ENCODE measurements at regions of chr13 and their contacts with region 1.

Region 1: GRCh38 chr13:50635504-50635903 is 208.0 kb downstream of the DLEU7 start:
- DNase-seq: peak; percentile 42
- ATAC-seq: peak; percentile 88
- H3K4me3 ChIP-seq: no peak overlapping the region
- H3K27ac ChIP-seq: 0 out of 2 replicates have a peak overlapping the region, but pooled peaks have one; percentile 4
- H3K4me1 ChIP-seq: peaks cover 8% of the 10 kb centered on the region
- H3K27me3 ChIP-seq: no peaks in the 10 kb centered on the region
- CTCF ChIP-seq: no peak
- EP300 ChIP-seq: no peak
- POLR2A ChIP-seq: no peak
- RAD21 ChIP-seq: no peak

Region 2: DNA sequence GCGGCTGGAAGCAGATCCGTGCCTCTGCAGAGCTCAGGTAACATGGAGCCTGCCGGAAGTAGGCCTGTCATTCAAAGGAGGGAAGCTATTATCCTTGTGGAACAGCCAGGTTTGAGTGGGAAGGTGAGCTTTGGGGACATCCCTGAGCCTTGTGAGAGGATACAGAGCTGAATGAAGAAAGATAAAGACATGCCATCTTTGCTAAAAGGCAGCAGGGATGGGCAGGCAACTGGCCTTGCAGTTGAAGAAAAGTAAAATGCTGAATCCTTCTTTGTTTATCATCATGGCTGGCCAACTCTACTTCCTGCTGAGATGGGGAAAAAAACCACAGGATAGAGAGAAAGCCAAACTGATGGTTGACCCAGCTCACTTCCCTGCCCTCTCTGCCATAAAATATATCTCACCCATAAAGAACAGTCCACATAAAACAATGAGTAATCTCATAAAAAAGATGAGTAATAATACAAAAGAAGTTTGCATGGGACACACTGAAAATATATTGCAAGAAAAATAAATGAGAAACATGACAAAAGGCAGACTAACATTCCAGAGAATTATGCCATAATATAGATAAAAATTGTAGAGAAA is 18.3 kb before region 1 on chr13:
- CTCF ChIA-PET with region 1: interaction called, 3 read pairs
- POLR2A ChIA-PET with region 1: interaction called, 3 read pairs
- RAD21 ChIA-PET with region 1: interaction called, 3 read pairs
- SMC1A ChIA-PET with region 1: interaction called, 10 read pairs
- in situ Hi-C with region 1: no loop called
- intact Hi-C with region 1: no loop called
- DNase-seq: no peak
- ATAC-seq: no peak
- H3K4me3 ChIP-seq: no peak overlapping the region
- H3K27ac ChIP-seq: no peak overlapping the region
- H3K4me1 ChIP-seq: no peaks in the 10 kb centered on the region
- H3K27me3 ChIP-seq: peaks cover 0 to 5% of the 10 kb centered on the region in 2 experiments; a peak in 1 of 4 replicates
- CTCF ChIP-seq: no peak
- EP300 ChIP-seq: no peak
- POLR2A ChIP-seq: no peak
- RAD21 ChIP-seq: no peak

Region 3: GRCh38 chr13:50650592-50651301 is 15.2 kb after region 1 on chr13:
- CTCF ChIA-PET with region 1: no interaction called
- POLR2A ChIA-PET with region 1: no interaction called
- RAD21 ChIA-PET with region 1: interaction called, 14 read pairs
- SMC1A ChIA-PET with region 1: interaction called, 10 read pairs
- in situ Hi-C with region 1: no loop called
- intact Hi-C with region 1: no loop called
- DNase-seq: no peak
- ATAC-seq: peak; percentile 35
- H3K4me3 ChIP-seq: no peak overlapping the region
- H3K27ac ChIP-seq: no peak overlapping the region
- H3K4me1 ChIP-seq: no peaks in the 10 kb centered on the region
- H3K27me3 ChIP-seq: no peaks in the 10 kb centered on the region
- CTCF ChIP-seq: no peak
- EP300 ChIP-seq: no peak
- POLR2A ChIP-seq: no peak
- RAD21 ChIP-seq: no peak

Region 4: DNA sequence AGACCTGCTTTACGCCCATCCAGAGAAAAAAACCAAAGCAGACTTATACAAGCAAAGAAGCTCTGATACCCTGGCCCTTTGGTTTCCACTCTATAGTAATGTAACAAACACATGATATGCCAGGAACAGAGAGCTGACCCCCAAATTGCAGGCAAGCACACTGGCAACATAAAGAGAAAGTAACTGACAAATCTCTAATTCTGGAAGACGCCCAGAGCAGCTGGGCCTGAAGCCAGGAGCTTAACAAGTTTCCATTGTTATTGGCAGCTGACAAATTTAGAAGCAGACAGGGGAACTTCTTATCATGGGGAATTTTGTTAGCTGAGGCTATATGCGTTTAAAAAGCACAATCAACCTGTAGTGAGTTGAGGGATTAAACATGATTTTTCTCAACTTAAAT is 50.0 kb after region 1 on chr13:
- CTCF ChIA-PET with region 1: no interaction called
- POLR2A ChIA-PET with region 1: no interaction called
- RAD21 ChIA-PET with region 1: interaction called, 4 read pairs
- SMC1A ChIA-PET with region 1: interaction called, 11 read pairs
- in situ Hi-C with region 1: no loop called
- intact Hi-C with region 1: no loop called
- DNase-seq: no peak
- ATAC-seq: peak; percentile 58
- H3K4me3 ChIP-seq: no peak overlapping the region
- H3K27ac ChIP-seq: no peak overlapping the region
- H3K4me1 ChIP-seq: peaks cover 6% of the 10 kb centered on the region
- H3K27me3 ChIP-seq: no peaks in the 10 kb centered on the region
- CTCF ChIP-seq: no peak
- EP300 ChIP-seq: no peak
- POLR2A ChIP-seq: no peak
- RAD21 ChIP-seq: no peak